ENCODE measurements at regions of chr18 and their contacts with region 1.

Region 1: DNA sequence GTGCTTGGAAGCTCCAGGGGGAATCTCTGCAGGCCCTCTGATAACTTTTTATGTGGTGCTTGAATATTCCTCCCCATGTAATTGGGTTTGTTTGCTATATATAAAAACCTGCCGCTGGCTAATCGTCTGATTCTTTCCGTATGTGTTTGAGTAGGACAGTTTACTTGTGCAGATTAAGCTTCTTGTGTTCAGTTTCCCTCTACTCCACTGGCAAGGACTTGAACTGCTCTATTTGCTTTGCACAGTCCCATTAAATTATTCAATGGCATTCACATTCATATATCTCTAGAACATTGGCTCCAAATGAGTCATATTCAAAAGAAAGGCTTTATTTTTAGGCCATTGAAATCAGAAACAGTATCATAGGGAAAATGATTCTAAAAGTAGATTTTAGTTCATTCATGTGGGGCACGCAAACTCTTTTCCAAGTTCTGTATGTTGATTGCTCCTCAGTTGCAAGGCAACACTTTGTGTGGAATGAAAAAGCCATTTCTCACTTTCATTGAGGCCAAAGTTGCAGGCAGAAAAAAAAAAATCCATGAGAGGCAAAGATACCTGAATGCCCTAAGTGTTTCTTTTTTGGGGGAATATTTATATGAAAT is 1682.3 kb upstream of the PIK3C3 start:
- DNase-seq: no peak
- H3K4me3 ChIP-seq: no peak overlapping the region
- CTCF ChIP-seq: no peak
- POLR2A ChIP-seq: no peak

Region 2: GRCh38 chr18:40243607-40244006 is 29.1 kb before region 1 on chr18:
- intact Hi-C with region 1: no loop called
- DNase-seq: no peak
- H3K4me3 ChIP-seq: no peak overlapping the region
- CTCF ChIP-seq: no peak
- POLR2A ChIP-seq: no peak

Region 3: GRCh38 chr18:41906528-41907146 is 1633.9 kb after region 1 on chr18:
- intact Hi-C with region 1: loop called (anchors 5 kb)
- DNase-seq: no peak
- H3K4me3 ChIP-seq: no peak overlapping the region
- CTCF ChIP-seq: no peak
- POLR2A ChIP-seq: no peak

Measured in lower leg skin (tissue), 4 donors.